Caco-2 (cell line): ENCODE measurements at regions of chr10 and their contacts with region 1.

Region 1: DNA sequence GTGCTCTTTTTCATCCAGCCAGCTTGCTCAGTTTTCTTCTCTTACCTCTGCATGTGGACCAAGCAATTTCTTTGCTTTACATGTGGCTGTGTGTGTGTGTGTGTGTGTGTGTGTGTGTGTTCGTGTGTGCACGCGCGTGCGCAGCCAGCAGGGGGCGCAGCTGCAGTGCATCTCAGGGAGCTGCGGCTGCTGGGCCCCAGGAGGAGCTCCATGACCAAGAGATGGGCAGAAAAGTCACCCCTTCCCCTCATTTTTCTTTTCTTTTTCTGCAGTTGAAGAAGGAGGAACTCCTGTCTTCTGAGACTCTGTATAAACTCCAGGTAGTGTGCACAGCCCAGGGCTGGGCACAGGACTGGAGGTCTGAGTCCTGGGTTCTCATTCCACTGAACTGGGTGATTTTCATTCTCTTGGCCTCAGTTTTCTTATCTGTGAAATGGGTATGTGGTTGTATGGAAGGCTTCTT is 41.8 kb downstream of the BLNK start:
- DNase-seq: peak; percentile 82 to 87
- H3K4me3 ChIP-seq: no peak overlapping the region
- H3K4me3 Mint-ChIP-seq: no peak overlapping the region
- H3K27ac Mint-ChIP-seq: no peak overlapping the region
- H3K4me1 ChIP-seq: peaks cover 3% of the 10 kb centered on the region; the same call in 1 of the 2 replicates
- H3K4me1 Mint-ChIP-seq: no peaks in the 10 kb centered on the region
- H3K27me3 ChIP-seq: no peaks in the 10 kb centered on the region
- H3K27me3 Mint-ChIP-seq: no peaks in the 10 kb centered on the region
- CTCF ChIP-seq: peak; percentile 87 to 97

Region 2: GRCh38 chr10:96017191-96017687 is 212.4 kb before region 1 on chr10:
- CTCF ChIA-PET with region 1: interaction called, 26 read pairs
- POLR2A ChIA-PET with region 1: no interaction called
- intact Hi-C with region 1: loop called (anchors 1 kb)
- DNase-seq: peak; percentile 54 to 75
- H3K4me3 ChIP-seq: no peak overlapping the region
- H3K4me3 Mint-ChIP-seq: no peak overlapping the region
- H3K27ac Mint-ChIP-seq: no peak overlapping the region
- H3K4me1 ChIP-seq: 0 out of 2 replicates have a peak, but pooled peaks cover 5% of the 10 kb centered on the region
- H3K4me1 Mint-ChIP-seq: peaks cover 6% of the 10 kb centered on the region
- H3K27me3 ChIP-seq: no peaks in the 10 kb centered on the region
- H3K27me3 Mint-ChIP-seq: no peaks in the 10 kb centered on the region
- CTCF ChIP-seq: peak; percentile 64 to 75

Region 3: DNA sequence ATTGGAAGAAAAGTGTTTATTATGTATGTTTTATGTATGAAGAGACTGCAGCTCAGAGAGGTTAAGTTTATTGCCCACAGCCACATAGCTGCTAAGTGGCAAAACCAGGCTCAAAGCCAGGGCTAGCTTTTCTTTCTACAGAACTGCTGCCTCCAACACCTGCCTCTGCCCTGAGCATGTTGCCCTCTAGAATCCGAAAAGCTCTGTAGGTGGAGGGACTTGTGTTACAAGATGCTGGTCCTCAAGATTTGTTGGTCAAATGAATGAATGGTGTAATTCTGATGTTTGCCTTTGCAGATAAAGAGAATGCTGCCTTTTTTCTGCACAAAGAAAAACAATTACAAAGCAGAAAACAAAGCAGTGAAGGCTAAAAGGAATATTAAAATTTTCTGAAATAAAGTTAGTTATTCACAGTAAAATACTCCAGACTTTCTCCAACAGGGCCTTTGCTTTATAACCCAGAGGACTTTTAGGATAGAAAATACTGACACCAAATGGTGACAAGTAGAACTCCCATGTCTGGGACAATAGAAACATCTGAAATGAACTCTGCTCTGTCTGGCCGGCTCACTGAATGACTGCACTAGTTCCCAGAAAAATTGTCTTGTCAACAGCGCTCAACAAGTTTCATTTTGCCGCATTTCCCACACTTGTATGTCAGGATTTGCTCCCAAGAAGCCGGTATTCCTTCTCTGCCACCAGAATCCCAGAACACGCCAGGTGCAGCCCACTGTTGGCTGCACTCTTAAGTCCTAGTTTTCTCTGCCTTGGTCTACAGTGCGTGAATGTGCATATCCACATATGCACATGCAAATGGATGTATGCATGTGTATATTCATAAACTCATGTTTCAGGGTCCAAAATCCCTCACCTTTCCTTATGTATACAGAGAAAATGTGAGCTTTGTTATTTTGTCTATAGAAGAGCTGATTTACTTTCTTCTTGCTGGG is 63.6 kb after region 1 on chr10:
- CTCF ChIA-PET with region 1: interaction called, 69 read pairs
- POLR2A ChIA-PET with region 1: no interaction called
- intact Hi-C with region 1: loop called (anchors 1 kb)
- DNase-seq: peak in 1 of 2 experiments; percentile 45
- H3K4me3 ChIP-seq: no peak overlapping the region
- H3K4me3 Mint-ChIP-seq: no peak overlapping the region
- H3K27ac Mint-ChIP-seq: no peak overlapping the region
- H3K4me1 ChIP-seq: peaks cover 4% of the 10 kb centered on the region
- H3K4me1 Mint-ChIP-seq: peaks cover 7% of the 10 kb centered on the region
- H3K27me3 ChIP-seq: no peaks in the 10 kb centered on the region
- H3K27me3 Mint-ChIP-seq: peaks cover 8% of the 10 kb centered on the region
- CTCF ChIP-seq: peak; percentile 56 to 60

Region 4: GRCh38 chr10:96317067-96317833 is 87.7 kb after region 1 on chr10:
- CTCF ChIA-PET with region 1: interaction called, 10 read pairs
- POLR2A ChIA-PET with region 1: no interaction called
- intact Hi-C with region 1: no loop called
- DNase-seq: no peak
- H3K4me3 ChIP-seq: no peak overlapping the region
- H3K4me3 Mint-ChIP-seq: no peak overlapping the region
- H3K27ac Mint-ChIP-seq: no peak overlapping the region
- H3K4me1 ChIP-seq: no peaks in the 10 kb centered on the region
- H3K4me1 Mint-ChIP-seq: no peaks in the 10 kb centered on the region
- H3K27me3 ChIP-seq: no peaks in the 10 kb centered on the region
- H3K27me3 Mint-ChIP-seq: peaks cover 7% of the 10 kb centered on the region
- CTCF ChIP-seq: no peak

Region 5: DNA sequence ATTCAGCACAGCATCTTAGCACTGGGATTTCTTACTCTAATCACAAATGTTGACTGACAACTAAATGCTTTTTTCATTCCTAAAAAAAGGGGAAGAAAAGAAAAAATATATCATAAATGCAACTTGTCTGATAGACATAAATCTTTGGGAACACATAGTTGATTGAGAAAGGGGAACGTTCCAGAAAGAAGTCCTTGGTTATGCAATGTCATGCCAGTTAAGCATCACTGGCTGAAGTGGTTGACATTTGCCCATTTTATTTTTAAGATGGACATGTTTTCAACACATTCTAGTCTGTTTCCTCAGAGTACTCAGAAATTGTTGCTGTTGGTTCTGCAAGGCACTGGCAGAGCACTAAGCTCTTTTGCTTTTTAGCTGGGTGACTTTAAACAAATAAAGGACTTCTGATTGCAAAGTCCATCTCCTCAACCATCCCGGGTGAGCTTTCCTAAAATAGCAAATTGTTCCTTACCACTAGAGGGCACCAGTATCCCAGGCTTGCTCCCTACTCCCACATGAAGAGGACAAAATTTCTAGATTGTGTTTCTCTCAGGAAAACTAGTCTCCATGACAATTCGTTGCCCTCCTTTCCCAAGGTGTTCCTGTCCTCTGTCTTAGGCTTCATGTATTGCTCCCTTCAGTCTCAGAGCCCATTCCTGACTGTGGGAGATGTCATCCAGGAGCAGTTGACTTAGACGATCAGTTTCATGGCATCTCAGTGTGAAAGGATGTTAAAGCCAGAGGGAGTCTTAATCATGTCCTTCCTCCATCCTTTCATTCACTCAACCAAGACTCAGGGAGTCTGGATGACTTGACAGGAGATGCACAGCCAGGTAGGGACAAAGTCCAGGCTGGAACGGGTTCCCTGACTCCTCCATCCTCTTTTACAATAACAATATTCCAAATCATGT is 105.3 kb after region 1 on chr10:
- CTCF ChIA-PET with region 1: interaction called, 10 read pairs
- POLR2A ChIA-PET with region 1: no interaction called
- intact Hi-C with region 1: no loop called
- DNase-seq: peak in 1 of 2 experiments; percentile 66
- H3K4me3 ChIP-seq: no peak overlapping the region
- H3K4me3 Mint-ChIP-seq: no peak overlapping the region
- H3K27ac Mint-ChIP-seq: no peak overlapping the region
- H3K4me1 ChIP-seq: no peaks in the 10 kb centered on the region
- H3K4me1 Mint-ChIP-seq: no peaks in the 10 kb centered on the region
- H3K27me3 ChIP-seq: no peaks in the 10 kb centered on the region
- H3K27me3 Mint-ChIP-seq: peaks cover 13% of the 10 kb centered on the region
- CTCF ChIP-seq: peak; percentile 73 to 83